Pancreas (tissue), 10 donors: ENCODE measurements at regions of chr21 and their contacts with region 1.

Region 1: DNA sequence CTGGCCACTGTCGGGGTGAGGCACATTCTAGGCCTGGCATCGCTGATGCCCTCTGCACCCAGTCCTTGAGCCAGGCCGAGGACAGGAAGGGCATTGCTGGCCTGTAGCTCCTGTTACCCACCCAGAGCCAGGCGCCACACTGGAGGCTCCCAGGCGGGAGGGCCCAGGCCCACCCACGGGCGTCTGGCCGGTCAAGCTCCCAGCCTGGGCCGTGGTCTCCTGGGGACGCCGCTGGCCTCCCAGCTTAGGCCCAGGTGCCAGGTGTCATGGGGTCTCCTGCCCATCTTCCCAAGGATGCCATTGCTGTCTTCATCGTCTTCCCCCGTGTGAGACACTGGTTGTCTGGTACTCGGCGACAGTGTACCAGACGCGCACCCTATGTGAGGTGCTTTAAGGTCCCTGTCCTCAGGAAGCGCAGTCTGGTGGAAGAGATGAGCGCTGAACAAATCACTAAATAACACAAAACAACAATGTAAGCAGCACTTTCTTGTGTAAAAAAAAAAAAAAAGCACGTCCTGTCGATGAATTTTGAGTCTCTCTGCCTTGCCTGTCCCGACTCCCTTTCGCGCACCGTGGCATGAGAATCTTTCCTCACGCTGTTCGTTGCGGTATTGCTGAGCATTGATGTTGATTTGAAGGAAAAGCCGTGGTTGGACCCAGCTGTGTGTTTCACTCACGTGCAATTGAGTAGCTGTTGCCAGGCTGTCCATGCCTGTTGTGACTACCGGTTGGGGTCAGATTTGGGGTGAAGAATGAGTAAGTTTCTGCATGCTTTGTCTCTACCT is 27.0 kb upstream of the TRAPPC10 start:
- DNase-seq: peak in 1 of 6 donors; percentile 17
- ATAC-seq: peak in 1 of 4 donors; percentile 16
- H3K4me3 ChIP-seq: no peak overlapping the region
- H3K27ac ChIP-seq: no peak overlapping the region
- H3K4me1 ChIP-seq: no peaks in the 10 kb centered on the region
- H3K27me3 ChIP-seq: no peaks in the 10 kb centered on the region
- CTCF ChIP-seq: no peak

Region 2: DNA sequence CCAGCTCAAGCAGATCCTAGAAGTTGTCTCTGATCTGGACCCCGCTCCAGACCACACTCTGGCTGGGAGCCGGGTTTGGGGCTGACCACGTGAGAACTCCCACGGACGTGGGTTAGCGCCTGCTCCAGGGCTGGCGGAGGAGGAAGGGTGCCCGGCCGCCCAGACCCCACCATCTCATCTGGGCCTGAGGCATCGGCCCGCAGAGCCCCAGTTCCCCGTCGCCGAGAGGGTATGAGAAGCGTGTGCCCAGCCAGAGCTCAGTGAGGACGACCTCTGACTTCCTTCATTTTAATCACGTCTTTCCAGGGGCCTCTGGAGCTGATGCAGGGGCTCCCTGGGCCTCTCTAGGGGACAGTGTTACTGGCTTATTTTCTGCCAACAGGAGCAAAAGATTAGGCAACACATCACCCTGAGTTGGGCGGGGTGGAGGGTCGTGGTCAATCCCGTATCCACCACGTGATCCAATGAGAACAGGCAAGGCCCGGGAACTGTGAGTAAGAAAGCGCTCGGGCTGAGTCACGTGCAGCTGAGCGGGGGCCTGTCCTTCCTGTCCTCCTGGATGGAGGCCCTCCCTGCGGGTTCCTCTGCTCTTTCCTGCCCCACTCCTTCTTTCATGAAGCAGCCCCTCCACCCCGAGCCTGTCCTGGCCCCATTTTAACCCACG is 639.2 kb before region 1 on chr21:
- intact Hi-C with region 1: no loop called
- DNase-seq: peak in 2 of 6 donors; percentile 42 to 62
- ATAC-seq: no peak
- H3K4me3 ChIP-seq: no peak overlapping the region
- H3K27ac ChIP-seq: no peak overlapping the region
- H3K4me1 ChIP-seq: peaks cover 17 to 24% (median 18%) of the 10 kb centered on the region in 3 donors
- H3K27me3 ChIP-seq: no peaks in the 10 kb centered on the region
- CTCF ChIP-seq: no peak

Region 3: GRCh38 chr21:43805275-43805800 is 179.8 kb before region 1 on chr21:
- intact Hi-C with region 1: loop called in 1 of 3 experiments (anchors 10 kb)
- DNase-seq: no peak
- ATAC-seq: no peak
- H3K4me3 ChIP-seq: no peak overlapping the region
- H3K27ac ChIP-seq: no peak overlapping the region
- H3K4me1 ChIP-seq: no peaks in the 10 kb centered on the region
- H3K27me3 ChIP-seq: no peaks in the 10 kb centered on the region
- CTCF ChIP-seq: no peak

Region 4: DNA sequence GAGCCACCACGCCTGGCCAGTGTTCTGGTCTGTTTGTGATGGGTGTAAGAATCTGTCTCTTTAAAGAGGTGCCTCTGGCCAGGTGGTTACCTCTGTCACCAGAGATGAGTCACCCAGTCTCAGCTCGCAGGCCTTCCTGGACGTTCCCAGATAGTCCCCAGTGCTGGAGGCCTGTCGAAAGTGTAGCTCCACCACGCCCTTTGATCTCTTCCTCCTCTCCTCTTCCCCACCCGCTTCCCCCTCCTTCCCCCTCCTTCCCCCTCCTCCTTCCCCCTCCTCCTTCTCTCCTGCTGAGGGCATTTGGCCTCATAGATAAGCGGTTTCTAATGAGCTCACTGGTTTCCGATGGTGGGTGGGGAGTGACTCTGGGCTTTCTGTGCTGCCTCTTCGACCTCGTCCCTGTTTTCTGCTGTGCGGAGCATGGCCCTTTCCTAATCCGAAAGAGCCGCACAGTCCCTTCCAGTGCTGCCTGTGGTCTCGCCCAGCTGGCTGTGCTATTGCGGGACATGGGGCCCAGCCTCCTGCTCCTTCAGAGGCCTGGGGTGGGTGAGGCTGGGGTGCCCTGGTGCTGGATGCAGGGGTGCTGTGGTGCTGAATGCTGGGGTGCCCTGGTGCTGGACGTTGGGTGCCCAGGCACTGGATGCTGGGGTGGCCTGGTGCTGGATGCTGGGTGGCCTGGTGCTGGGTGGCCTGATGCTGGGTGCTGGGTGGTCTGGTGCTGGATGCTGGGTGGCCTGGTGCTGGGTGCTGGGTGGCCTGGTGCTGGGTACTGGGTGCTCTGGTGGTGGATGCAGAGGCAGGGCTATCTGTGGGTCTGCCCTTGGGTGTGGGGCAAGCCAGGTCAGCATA is 100.9 kb before region 1 on chr21:
- intact Hi-C with region 1: no loop called
- DNase-seq: peak in 5 of 6 donors; percentile 48 to 64 (median 56)
- ATAC-seq: peak; percentile 68 to 90 (median 80)
- H3K4me3 ChIP-seq: no peak overlapping the region
- H3K27ac ChIP-seq: peak overlapping the region in 2 of 4 donors; percentile 51 to 61
- H3K4me1 ChIP-seq: peaks cover 4 to 22% (median 6%) of the 10 kb centered on the region in 3 donors
- H3K27me3 ChIP-seq: no peaks in the 10 kb centered on the region
- CTCF ChIP-seq: no peak

Region 5: GRCh38 chr21:44405948-44406872 is 421.1 kb after region 1 on chr21:
- intact Hi-C with region 1: no loop called
- DNase-seq: peak in 1 of 6 donors; percentile 71
- ATAC-seq: no peak
- H3K4me3 ChIP-seq: no peak overlapping the region
- H3K27ac ChIP-seq: no peak overlapping the region
- H3K4me1 ChIP-seq: no peaks in the 10 kb centered on the region
- H3K27me3 ChIP-seq: no peaks in the 10 kb centered on the region
- CTCF ChIP-seq: no peak